PC-9 (cell line): ENCODE measurements at regions of chr6 and their contacts with region 1.

Region 1: GRCh38 chr6:88135578-88136114 is 30.5 kb downstream of the CNR1 start:
- DNase-seq: no peak
- H3K4me3 ChIP-seq: no peak overlapping the region
- H3K27ac ChIP-seq: no peak overlapping the region
- H3K4me1 ChIP-seq: no peaks in the 10 kb centered on the region
- H3K27me3 ChIP-seq: no peaks in the 10 kb centered on the region
- CTCF ChIP-seq: no peak

Region 2: GRCh38 chr6:88013015-88013414 is 122.6 kb before region 1 on chr6:
- CTCF ChIA-PET with region 1: no interaction called
- POLR2A ChIA-PET with region 1: no interaction called
- intact Hi-C with region 1: no loop called
- DNase-seq: no peak
- H3K4me3 ChIP-seq: no peak overlapping the region
- H3K27ac ChIP-seq: no peak overlapping the region
- H3K4me1 ChIP-seq: no peaks in the 10 kb centered on the region
- H3K27me3 ChIP-seq: no peaks in the 10 kb centered on the region
- CTCF ChIP-seq: no peak

Region 3: DNA sequence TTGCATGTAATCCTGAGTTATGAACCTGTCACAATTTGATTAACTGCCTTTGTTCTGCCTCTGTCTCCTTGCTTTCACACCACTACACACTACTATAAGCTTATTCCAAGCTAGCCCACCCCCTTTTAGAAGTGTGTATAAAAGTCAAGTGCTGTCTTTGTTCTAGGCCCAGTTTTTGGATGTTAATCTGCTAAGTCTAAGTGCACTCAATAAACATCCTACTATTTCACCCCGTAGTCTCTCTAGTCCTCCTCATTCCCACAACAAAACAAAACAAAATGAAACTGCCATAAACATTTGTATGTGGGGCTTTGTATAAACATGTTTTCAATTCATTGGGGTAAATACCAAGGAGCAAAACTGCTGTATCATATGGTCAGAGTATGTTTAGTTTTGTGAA is 104.1 kb before region 1 on chr6:
- CTCF ChIA-PET with region 1: interaction called, 12 read pairs
- POLR2A ChIA-PET with region 1: no interaction called
- intact Hi-C with region 1: no loop called
- DNase-seq: no peak
- H3K4me3 ChIP-seq: no peak overlapping the region
- H3K27ac ChIP-seq: no peak overlapping the region
- H3K4me1 ChIP-seq: no peaks in the 10 kb centered on the region
- H3K27me3 ChIP-seq: no peaks in the 10 kb centered on the region
- CTCF ChIP-seq: no peak

Region 4: DNA sequence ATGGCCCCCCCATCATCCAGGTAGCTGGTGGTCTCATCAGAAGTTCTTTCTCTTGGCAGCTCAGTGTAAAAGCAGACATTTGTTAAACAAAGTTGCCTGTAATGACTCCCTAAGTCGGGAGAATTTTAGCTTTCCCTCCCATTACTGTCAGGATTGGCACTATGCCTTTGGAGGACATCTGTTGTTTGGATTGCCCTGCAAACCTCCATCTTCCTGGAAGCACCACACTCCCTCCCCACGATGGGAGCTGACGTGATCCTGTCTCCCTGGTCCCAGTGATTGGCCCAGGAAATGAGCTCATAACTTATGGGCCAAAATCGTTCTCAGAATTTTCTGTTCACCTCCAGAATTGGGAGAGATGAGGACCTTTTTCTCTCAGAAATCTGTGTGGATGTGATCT is 73.1 kb after region 1 on chr6:
- CTCF ChIA-PET with region 1: no interaction called
- POLR2A ChIA-PET with region 1: no interaction called
- intact Hi-C with region 1: no loop called
- DNase-seq: no peak
- H3K4me3 ChIP-seq: no peak overlapping the region
- H3K27ac ChIP-seq: no peak overlapping the region
- H3K4me1 ChIP-seq: no peaks in the 10 kb centered on the region
- H3K27me3 ChIP-seq: no peaks in the 10 kb centered on the region
- CTCF ChIP-seq: no peak